Posterior vena cava (tissue), 2 donors: ENCODE measurements at regions of chr17 and their contacts with region 1.

Region 1: DNA sequence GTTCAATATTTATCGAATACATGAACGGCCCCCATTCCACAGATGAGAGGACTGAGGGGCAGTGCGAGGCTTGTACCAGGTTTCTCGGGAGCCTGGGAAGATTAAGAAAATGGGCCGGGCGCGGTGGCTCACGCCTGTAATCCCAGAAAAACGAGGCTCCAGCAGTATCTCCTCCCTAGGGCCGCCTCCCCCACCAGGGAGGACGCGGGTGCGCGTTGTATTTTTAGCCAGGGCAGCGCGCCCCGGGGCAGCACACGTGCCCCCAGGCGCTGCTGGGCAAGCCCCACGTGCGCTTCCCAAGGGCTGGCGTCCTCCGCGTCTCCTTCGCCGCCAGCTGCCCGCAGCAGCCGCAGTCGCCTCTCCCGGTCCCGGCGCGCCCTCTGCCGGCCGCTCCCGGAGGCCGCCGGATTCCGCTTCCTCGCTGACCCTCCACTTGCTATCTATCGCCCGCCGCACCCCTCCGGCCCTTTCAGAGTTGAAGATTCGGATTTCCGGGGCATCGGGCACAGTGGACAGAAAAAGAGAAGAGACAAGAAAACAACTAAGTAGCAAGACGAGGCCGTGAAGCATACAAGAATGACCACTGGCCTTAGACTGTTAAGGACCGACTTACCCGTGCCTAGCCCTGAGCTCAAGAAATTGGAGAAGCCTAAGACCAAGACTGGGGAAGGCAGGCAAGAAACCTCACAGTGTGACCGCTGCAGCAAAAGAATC is 1.9 kb upstream of the YBX2 start:
- DNase-seq: peak; percentile 95

Region 2: DNA sequence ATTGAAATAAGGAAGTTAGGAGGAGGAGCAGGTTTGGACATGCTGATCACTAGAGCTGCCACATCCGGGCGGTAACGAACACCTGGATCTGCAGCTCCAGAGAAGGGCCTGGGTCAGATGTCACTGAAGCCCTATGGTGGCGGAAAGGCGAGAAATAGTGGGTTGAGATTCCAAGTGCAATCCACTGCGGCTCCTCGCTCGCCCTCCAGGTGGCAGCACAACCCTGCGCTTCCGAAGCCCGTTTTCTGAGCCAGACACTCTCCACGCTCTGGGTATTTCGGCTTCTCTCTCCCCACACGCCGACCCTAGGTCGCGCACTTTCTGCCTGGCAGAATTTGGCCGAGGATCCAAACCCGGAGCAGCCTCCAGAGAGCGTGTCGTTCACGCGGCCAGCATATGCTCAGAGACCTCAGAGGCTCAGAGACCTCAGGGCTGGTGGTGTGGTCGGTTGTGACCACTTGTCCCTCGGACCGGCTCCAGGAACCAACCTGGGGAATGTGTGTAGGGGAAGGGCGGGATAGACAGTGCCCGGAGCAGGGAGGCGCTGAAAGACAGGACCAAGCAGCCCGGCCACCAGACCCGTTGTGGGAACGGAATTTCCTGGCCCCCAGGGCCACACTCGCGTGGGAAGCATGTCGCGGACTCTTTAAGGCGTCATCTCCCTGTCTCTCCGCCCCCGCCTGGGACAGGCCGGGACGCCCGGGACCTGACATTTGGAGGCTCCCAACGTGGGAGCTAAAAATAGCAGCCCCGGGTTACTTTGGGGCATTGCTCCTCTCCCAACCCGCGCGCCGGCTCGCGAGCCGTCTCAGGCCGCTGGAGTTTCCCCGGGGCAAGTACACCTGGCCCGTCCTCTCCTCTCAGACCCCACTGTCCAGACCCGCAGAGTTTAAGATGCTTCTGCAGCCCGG is 15.6 kb before region 1 on chr17:
- intact Hi-C with region 1: loop called in 1 of 2 experiments (anchors 2 kb)
- DNase-seq: peak; percentile 95